ENCODE measurements at regions of chr13 and their contacts with region 1.

Region 1: GRCh38 chr13:26985285-26985878 is 186.2 kb downstream of the USP12 start:
- DNase-seq: peak; percentile 47 to 77
- ATAC-seq: peak; percentile 67 to 73
- H3K4me3 ChIP-seq: no peak overlapping the region
- H3K27ac ChIP-seq: peak overlapping the region in 1 of 2 experiments; percentile 82; a peak in 2 of 6 replicates
- H3K4me1 ChIP-seq: peaks cover 59% of the 10 kb centered on the region
- CTCF ChIP-seq: peak; percentile 77
- EP300 ChIP-seq: no peak
- POLR2A ChIP-seq: no peak
- RAD21 ChIP-seq: peak; percentile 93 to 95

Region 2: GRCh38 chr13:26946684-26947343 is 38.6 kb before region 1 on chr13:
- CTCF ChIA-PET with region 1: interaction called, 17 read pairs
- POLR2A ChIA-PET with region 1: interaction called, 3 read pairs
- DNase-seq: peak; percentile 50 to 71
- ATAC-seq: peak; percentile 92
- H3K4me3 ChIP-seq: no peak overlapping the region
- H3K27ac ChIP-seq: no peak overlapping the region
- H3K4me1 ChIP-seq: no peaks in the 10 kb centered on the region
- CTCF ChIP-seq: peak; percentile 72
- EP300 ChIP-seq: no peak
- POLR2A ChIP-seq: no peak
- RAD21 ChIP-seq: peak; percentile 79 to 89

Region 3: DNA sequence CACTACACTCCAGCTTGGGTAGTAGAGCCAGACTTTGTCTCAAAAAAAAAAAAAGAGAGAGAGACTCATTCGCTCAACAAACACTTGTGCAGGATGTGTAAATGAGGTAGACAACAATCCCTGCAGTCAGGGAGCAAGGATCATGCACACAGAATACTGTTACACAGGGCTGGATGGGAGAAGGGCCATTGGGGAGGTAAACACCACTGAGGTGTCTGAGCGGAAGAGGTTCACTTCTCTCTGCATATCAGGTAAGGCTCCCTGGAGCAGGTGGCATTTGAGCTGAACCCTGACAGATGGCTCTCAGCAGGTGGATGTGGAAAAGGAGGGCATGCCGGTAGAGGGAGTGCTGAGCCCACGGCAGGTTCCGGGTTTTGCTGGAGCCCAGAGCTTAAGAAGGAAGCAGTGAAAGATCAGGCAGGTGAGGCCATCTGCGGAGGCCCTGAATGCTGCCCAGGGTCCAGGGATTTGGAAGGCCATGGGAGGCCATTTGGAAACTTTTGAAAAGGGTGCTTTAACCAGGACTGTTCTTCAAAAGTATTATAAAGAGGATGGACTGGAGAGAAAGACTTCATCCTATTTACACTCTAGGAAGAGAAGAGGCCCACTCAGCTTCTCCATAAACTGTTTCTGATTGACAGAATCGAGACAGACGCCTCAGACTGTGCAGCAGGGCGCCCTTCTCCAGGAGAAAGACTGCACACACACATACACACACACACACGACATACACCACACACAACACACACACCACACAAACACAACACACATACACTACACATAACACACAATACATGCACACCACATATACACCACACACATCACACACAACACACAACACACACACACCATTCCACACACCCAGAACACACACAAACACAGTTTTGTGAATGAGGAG is 13.1 kb before region 1 on chr13:
- CTCF ChIA-PET with region 1: interaction called, 26 read pairs
- POLR2A ChIA-PET with region 1: interaction called, 3 read pairs
- DNase-seq: peak in 1 of 2 experiments; percentile 80
- ATAC-seq: peak; percentile 88 to 90
- H3K4me3 ChIP-seq: no peak overlapping the region
- H3K27ac ChIP-seq: peak overlapping the region in 1 of 2 experiments; percentile 45; a peak in 1 of 6 replicates
- H3K4me1 ChIP-seq: peaks cover 9% of the 10 kb centered on the region
- CTCF ChIP-seq: peak; percentile 42
- EP300 ChIP-seq: no peak
- POLR2A ChIP-seq: no peak
- RAD21 ChIP-seq: peak; percentile 66 to 78

Region 4: DNA sequence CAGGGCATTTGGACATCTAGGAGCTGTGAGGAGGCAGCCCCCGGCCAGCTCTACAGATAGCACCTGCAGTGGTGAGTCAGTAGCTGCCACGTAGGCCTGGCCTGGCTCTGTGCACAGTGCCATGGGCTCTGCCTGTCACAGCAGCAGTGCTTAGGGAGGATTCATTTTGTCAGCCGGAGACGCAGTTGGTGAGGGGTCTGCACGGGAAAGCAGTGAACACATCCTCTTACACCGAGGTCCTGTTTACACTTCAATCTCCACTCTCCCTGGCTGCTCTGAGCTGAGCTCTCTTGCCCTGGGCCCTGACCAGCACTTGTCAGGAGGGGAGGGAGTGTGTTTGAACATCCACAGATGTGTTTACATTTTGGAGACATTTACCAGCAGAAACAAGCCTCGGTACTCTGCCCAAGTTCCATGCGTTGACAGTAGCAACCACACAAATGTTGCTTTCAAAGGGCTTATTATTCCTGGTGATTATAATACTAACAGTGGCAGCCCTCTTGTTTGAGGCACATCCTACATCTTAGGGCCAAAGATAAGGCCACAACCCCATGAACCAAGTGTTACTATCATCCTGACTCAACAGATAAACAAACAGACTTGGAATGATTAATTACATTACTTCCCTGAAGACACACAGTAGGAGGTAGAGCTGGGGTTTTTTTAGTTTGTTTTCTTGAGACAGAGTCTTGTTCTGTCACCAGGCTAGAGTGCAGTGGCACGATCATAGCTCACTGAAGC is 37.4 kb after region 1 on chr13:
- CTCF ChIA-PET with region 1: interaction called, 17 read pairs
- POLR2A ChIA-PET with region 1: no interaction called
- DNase-seq: peak; percentile 41 to 88
- ATAC-seq: peak; percentile 90 to 92
- H3K4me3 ChIP-seq: no peak overlapping the region
- H3K27ac ChIP-seq: peak overlapping the region; percentile 68 to 83
- H3K4me1 ChIP-seq: peaks cover 32% of the 10 kb centered on the region
- CTCF ChIP-seq: no peak
- EP300 ChIP-seq: peak in 1 of 2 experiments; percentile 38; a peak in 1 of 5 replicates
- POLR2A ChIP-seq: no peak
- RAD21 ChIP-seq: no peak

Region 5: GRCh38 chr13:27251166-27252091 is 266.0 kb after region 1 on chr13 and contains the start of gene RPL21:
- CTCF ChIA-PET with region 1: interaction called, 10 read pairs
- POLR2A ChIA-PET with region 1: interaction called, 3 read pairs
- DNase-seq: peak; percentile 66 to 97
- ATAC-seq: peak; percentile 97 to 98
- H3K4me3 ChIP-seq: peak within 1 kb of the TSS; percentile 99
- H3K27ac ChIP-seq: peak within 1 kb of the TSS; percentile 97 to 98
- H3K4me1 ChIP-seq: peaks cover 37% of the 10 kb centered on the region; the same call in 2 of the 3 replicates
- CTCF ChIP-seq: no peak
- EP300 ChIP-seq: no peak
- POLR2A ChIP-seq: peak; percentile 51
- RAD21 ChIP-seq: no peak; a peak in 1 of 5 replicates
- polyA plus RNA-seq, gene RPL21: 1,202 and 1,438 TPM in 2 replicates

Region 6: DNA sequence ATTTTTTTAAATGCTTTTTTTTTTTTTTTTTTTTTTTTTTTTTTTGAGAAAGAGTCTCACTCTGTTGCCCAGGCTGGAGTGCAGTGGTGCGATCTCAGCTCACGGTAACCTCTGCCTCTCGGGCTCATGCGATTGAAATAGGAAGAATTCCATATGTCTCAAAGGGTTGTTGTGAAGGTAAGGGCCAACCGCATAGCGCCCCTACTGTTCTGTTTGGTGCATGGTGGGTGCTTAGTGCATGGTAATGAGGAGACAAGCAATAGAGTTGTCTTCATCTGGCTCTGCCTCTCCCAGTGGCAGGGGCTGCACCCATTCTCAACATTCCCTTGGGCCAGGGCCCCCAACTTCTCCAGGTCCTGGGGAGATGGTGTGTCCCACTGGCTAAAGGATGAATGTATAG is 353.9 kb after region 1 on chr13:
- CTCF ChIA-PET with region 1: interaction called, 10 read pairs
- POLR2A ChIA-PET with region 1: no interaction called
- DNase-seq: peak; percentile 37 to 73
- ATAC-seq: peak; percentile 80 to 94
- H3K4me3 ChIP-seq: no peak overlapping the region
- H3K27ac ChIP-seq: no peak overlapping the region
- H3K4me1 ChIP-seq: peaks cover 11% of the 10 kb centered on the region; the same call in 1 of the 3 replicates
- CTCF ChIP-seq: peak; percentile 39; the same call in 2 of the 3 replicates
- EP300 ChIP-seq: no peak
- POLR2A ChIP-seq: no peak
- RAD21 ChIP-seq: peak in 1 of 2 experiments; percentile 42; a peak in 2 of 5 replicates

Region 7: GRCh38 chr13:27362064-27362883 is 376.9 kb after region 1 on chr13:
- CTCF ChIA-PET with region 1: interaction called, 220 read pairs
- POLR2A ChIA-PET with region 1: interaction called, 6 read pairs
- DNase-seq: peak; percentile 81
- ATAC-seq: peak; percentile 97 to 98
- H3K4me3 ChIP-seq: peak overlapping the region; percentile 42
- H3K27ac ChIP-seq: peak overlapping the region; percentile 53 to 82; a peak in 4 of 6 replicates
- H3K4me1 ChIP-seq: peaks cover 4% of the 10 kb centered on the region; the same call in 1 of the 3 replicates
- CTCF ChIP-seq: peak; percentile 73
- EP300 ChIP-seq: no peak
- POLR2A ChIP-seq: no peak
- RAD21 ChIP-seq: peak; percentile 80 to 85

Measured in A549 (cell line).